CD4-positive, alpha-beta T cell (primary cell): ENCODE measurements at regions of chr11 and their contacts with region 1.

Region 1: DNA sequence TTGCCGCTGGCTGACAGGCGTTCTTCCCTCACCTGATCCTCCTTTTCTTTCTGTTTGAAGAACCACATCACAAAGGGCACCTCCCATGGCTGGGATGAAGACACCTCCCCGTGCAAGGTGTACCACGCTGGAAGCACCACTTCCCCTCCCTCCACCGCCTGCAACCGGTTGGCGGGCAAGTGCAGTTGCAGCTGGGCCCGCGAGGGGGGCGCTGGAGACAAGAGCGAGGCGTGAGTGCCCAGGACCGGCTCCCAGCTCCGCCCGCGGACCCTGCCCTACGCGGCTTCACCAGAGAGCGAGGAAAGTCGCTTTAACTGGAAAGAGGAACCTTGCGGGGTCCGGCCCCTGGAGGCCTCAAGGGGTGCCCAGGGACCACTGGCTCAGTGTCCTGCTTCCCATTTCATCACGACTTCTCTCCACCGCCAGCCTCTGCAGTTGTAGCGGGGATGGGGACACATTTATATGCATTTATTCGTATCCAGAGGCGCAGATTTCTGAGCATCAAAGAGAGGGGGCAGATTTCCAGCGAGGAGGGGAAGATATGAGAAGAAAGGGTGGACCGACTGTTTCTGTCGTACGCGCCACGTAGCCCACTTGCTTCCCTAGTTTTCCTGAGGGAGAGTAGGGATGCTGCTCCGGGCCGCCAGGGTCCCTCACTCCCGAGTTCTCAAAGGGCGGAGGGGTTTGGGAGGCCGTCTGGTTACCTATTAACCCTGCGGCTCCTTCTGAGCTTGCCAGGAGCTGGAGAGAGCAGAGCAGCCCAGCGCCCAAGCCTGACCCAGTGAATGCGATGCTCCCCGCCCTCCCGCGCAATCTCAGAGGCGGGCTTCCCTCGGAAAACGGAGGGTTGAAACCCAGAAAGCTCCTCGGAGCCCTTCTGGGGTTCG is 3.5 kb downstream of the ESAM start:
- DNase-seq: peak; percentile 41 to 84 (median 62)
- ATAC-seq: peak; percentile 80
- H3K4me3 ChIP-seq: peak overlapping the region; percentile 13
- H3K4me3 Mint-ChIP-seq: peak overlapping the region; percentile 59
- H3K27ac ChIP-seq: no peak overlapping the region
- H3K27ac Mint-ChIP-seq: no peak overlapping the region
- H3K4me1 ChIP-seq: peaks cover 53% of the 10 kb centered on the region
- H3K4me1 Mint-ChIP-seq: peaks cover 36% of the 10 kb centered on the region
- H3K27me3 ChIP-seq: peaks cover 55 to 60% of the 10 kb centered on the region in 2 experiments
- H3K27me3 Mint-ChIP-seq: peaks cover 76% of the 10 kb centered on the region
- CTCF ChIP-seq: peak; percentile 78

Region 2: GRCh38 chr11:123741159-123742028 is 1017.2 kb before region 1 on chr11 and contains the start of gene ZNF202:
- CTCF ChIA-PET with region 1: no interaction called
- POLR2A ChIA-PET with region 1: no interaction called
- intact Hi-C with region 1: loop called in 1 of 2 experiments (anchors 10 kb)
- DNase-seq: peak; percentile 81 to 95 (median 89)
- ATAC-seq: peak; percentile 93
- H3K4me3 ChIP-seq: peak within 1 kb of the TSS; percentile 98
- H3K4me3 Mint-ChIP-seq: peak within 1 kb of the TSS; percentile 97
- H3K27ac ChIP-seq: peak within 1 kb of the TSS; percentile 33 to 61
- H3K27ac Mint-ChIP-seq: peak within 1 kb of the TSS; percentile 86
- H3K4me1 ChIP-seq: peaks cover 19% of the 10 kb centered on the region
- H3K4me1 Mint-ChIP-seq: peaks cover 45% of the 10 kb centered on the region
- H3K27me3 ChIP-seq: no peaks in the 10 kb centered on the region
- H3K27me3 Mint-ChIP-seq: peaks cover 11% of the 10 kb centered on the region
- CTCF ChIP-seq: no peak
- total RNA-seq, gene ZNF202: 6.8 to 8.0 TPM

Region 3: GRCh38 chr11:124518989-124519451 is 239.5 kb before region 1 on chr11:
- CTCF ChIA-PET with region 1: no interaction called
- POLR2A ChIA-PET with region 1: no interaction called
- intact Hi-C with region 1: no loop called
- DNase-seq: peak in 1 of 14 experiments; percentile 4
- ATAC-seq: no peak
- H3K4me3 ChIP-seq: no peak overlapping the region
- H3K4me3 Mint-ChIP-seq: no peak overlapping the region
- H3K27ac ChIP-seq: no peak overlapping the region
- H3K27ac Mint-ChIP-seq: no peak overlapping the region
- H3K4me1 ChIP-seq: no peaks in the 10 kb centered on the region
- H3K4me1 Mint-ChIP-seq: no peaks in the 10 kb centered on the region
- H3K27me3 ChIP-seq: no peaks in the 10 kb centered on the region
- H3K27me3 Mint-ChIP-seq: peaks cover 6% of the 10 kb centered on the region
- CTCF ChIP-seq: no peak

Region 4: DNA sequence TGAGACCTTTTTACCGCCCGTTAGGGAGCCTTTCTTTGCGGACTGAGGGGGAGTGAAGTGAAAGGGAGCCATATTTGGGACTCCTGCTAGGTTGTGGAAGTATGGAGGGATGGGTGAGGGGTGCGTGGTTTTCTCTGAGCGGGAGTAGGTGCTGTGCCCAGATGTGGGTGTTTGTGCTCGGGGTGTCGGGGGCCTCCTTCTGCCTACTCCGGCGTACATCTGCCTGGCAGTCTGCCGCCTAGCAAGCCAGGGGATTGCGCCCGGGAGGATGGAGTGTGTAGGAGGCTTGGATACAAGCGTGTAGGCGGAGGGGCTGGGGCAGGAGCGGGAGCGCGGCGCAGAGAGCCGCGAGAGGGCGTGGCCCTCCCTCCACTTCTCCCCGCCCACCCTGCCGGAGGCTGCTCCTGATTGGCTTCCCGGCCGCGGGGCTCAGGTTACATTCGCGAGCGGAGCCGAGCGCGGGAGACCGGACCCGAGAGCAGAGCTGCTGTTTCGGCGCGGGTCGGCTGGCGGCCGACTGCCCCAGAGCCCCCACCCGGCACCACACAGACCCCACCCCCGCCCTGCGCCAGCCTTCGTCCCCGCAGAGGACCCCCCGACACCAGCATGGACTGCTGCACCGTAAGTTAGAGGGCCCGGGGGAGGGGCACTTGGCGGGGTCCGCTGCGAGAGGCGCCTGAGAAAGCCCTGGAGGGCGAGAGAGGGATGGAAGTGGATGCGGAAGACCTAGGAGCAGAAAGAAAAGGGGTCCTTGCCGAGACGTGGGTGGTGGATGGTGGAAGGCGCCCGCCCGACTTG is 18.9 kb before region 1 on chr11 and contains the start of gene NRGN:
- CTCF ChIA-PET with region 1: interaction called, 46 read pairs
- POLR2A ChIA-PET with region 1: interaction called, 34 read pairs
- intact Hi-C with region 1: no loop called
- DNase-seq: peak; percentile 68 to 90 (median 80)
- ATAC-seq: peak; percentile 92
- H3K4me3 ChIP-seq: peak within 1 kb of the TSS; percentile 64
- H3K4me3 Mint-ChIP-seq: peak within 1 kb of the TSS; percentile 83
- H3K27ac ChIP-seq: no peak within 1 kb of the TSS
- H3K27ac Mint-ChIP-seq: no peak within 1 kb of the TSS
- H3K4me1 ChIP-seq: peaks cover 16% of the 10 kb centered on the region
- H3K4me1 Mint-ChIP-seq: peaks cover 21% of the 10 kb centered on the region
- H3K27me3 ChIP-seq: peaks cover 0 to 6% of the 10 kb centered on the region in 2 experiments
- H3K27me3 Mint-ChIP-seq: peaks cover 7% of the 10 kb centered on the region
- CTCF ChIP-seq: no peak
- total RNA-seq, gene NRGN: 0.84 to 1.4 TPM

Region 5: DNA sequence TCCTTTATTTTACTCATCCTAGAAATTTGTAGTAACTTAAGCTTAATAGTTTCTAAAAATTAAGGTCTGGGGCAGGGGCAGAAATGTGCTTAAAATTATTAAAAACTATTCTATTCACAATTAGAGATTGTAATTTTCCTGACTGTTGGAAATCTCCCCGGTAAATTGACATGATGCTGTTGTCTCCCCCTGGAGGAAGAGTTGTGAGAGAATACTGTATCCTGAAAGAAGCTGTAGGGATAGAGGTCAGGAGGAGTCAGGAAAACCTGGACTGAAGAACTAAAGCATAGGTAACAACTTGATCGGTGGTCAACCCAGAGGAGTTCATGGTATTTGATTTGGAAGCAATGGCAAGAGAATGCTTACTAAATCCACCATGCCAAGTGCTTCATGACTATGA is 19.7 kb after region 1 on chr11:
- CTCF ChIA-PET with region 1: interaction called, 15 read pairs
- POLR2A ChIA-PET with region 1: no interaction called
- intact Hi-C with region 1: no loop called
- DNase-seq: no peak
- ATAC-seq: no peak
- H3K4me3 ChIP-seq: no peak overlapping the region
- H3K4me3 Mint-ChIP-seq: no peak overlapping the region
- H3K27ac ChIP-seq: no peak overlapping the region
- H3K27ac Mint-ChIP-seq: no peak overlapping the region
- H3K4me1 ChIP-seq: peaks cover 3% of the 10 kb centered on the region
- H3K4me1 Mint-ChIP-seq: peaks cover 28% of the 10 kb centered on the region
- H3K27me3 ChIP-seq: no peaks in the 10 kb centered on the region
- H3K27me3 Mint-ChIP-seq: no peaks in the 10 kb centered on the region
- CTCF ChIP-seq: no peak

Region 6: DNA sequence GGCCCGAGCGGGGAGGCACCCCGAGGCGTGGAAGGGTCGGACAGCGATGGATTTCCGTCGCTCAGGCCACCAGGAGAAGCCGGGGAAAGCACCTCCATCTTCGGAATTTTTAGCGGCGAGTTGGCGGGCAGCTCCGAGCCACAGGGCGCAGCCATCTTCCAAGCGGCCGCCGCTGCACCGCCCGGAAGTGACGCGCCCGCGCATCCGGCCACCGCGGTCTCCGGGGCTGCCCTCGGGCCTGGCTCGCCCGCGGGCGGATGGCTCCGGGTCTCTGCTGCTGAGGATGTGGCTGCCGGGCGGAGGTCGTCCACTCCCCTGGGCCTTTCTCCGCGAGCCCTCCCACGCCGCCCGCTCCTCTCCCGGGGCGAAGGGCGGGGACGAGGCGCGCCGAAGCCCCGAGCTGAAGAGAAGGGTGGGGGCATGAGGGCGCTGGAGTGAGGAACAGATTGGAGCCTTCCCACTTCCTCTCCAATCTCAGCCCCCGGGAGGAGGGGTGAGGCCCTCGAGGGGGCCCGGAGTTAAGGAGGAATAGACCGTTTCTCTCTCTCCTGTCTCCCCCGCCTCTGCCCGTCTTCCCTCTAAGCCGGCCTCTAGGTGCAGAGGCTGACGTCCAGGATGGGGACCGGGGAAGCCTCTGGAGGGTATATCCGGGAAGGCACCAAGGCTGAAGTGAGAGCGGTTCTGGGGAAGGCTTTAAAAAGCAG is 41.8 kb after region 1 on chr11 and contains the start of gene MSANTD2:
- CTCF ChIA-PET with region 1: interaction called, 31 read pairs
- POLR2A ChIA-PET with region 1: interaction called, 4 read pairs
- intact Hi-C with region 1: no loop called
- DNase-seq: peak; percentile 53 to 89 (median 71)
- ATAC-seq: peak; percentile 79
- H3K4me3 ChIP-seq: peak within 1 kb of the TSS; percentile 85
- H3K4me3 Mint-ChIP-seq: peak within 1 kb of the TSS; percentile 98
- H3K27ac ChIP-seq: peak within 1 kb of the TSS; percentile 94 to 96
- H3K27ac Mint-ChIP-seq: peak within 1 kb of the TSS; percentile 95
- H3K4me1 ChIP-seq: peaks cover 20% of the 10 kb centered on the region
- H3K4me1 Mint-ChIP-seq: peaks cover 25% of the 10 kb centered on the region
- H3K27me3 ChIP-seq: no peaks in the 10 kb centered on the region
- H3K27me3 Mint-ChIP-seq: no peaks in the 10 kb centered on the region
- CTCF ChIP-seq: no peak
- total RNA-seq, gene MSANTD2: 4.2 to 5.1 TPM

Region 7: GRCh38 chr11:125214571-125215565 is 456.3 kb after region 1 on chr11:
- CTCF ChIA-PET with region 1: no interaction called
- POLR2A ChIA-PET with region 1: no interaction called
- intact Hi-C with region 1: no loop called
- DNase-seq: no peak
- ATAC-seq: no peak
- H3K4me3 ChIP-seq: no peak overlapping the region
- H3K4me3 Mint-ChIP-seq: no peak overlapping the region
- H3K27ac ChIP-seq: no peak overlapping the region
- H3K27ac Mint-ChIP-seq: no peak overlapping the region
- H3K4me1 ChIP-seq: no peaks in the 10 kb centered on the region
- H3K4me1 Mint-ChIP-seq: no peaks in the 10 kb centered on the region
- H3K27me3 ChIP-seq: peaks cover 0 to 6% of the 10 kb centered on the region in 2 experiments
- H3K27me3 Mint-ChIP-seq: peaks cover 52% of the 10 kb centered on the region
- CTCF ChIP-seq: no peak